Caco-2 (cell line): ENCODE measurements at regions of chr20 and their contacts with region 1.

Region 1: GRCh38 chr20:62808211-62808865 is 3.7 kb downstream of the OGFR start:
- DNase-seq: peak in 1 of 2 experiments; percentile 92
- H3K4me3 ChIP-seq: no peak overlapping the region
- H3K4me3 Mint-ChIP-seq: no peak overlapping the region
- H3K27ac Mint-ChIP-seq: no peak overlapping the region
- H3K4me1 ChIP-seq: peaks cover 14% of the 10 kb centered on the region
- H3K4me1 Mint-ChIP-seq: peaks cover 12% of the 10 kb centered on the region
- H3K27me3 ChIP-seq: no peaks in the 10 kb centered on the region
- H3K27me3 Mint-ChIP-seq: no peaks in the 10 kb centered on the region
- CTCF ChIP-seq: peak; percentile 98 to 100

Region 2: GRCh38 chr20:62466806-62467537 is 341.4 kb before region 1 on chr20:
- CTCF ChIA-PET with region 1: no interaction called
- POLR2A ChIA-PET with region 1: no interaction called
- intact Hi-C with region 1: no loop called
- DNase-seq: no peak
- H3K4me3 ChIP-seq: no peak overlapping the region
- H3K4me3 Mint-ChIP-seq: no peak overlapping the region
- H3K27ac Mint-ChIP-seq: no peak overlapping the region
- H3K4me1 ChIP-seq: peaks cover 1% of the 10 kb centered on the region
- H3K4me1 Mint-ChIP-seq: peaks cover 4% of the 10 kb centered on the region
- H3K27me3 ChIP-seq: no peaks in the 10 kb centered on the region
- H3K27me3 Mint-ChIP-seq: no peaks in the 10 kb centered on the region
- CTCF ChIP-seq: no peak

Region 3: DNA sequence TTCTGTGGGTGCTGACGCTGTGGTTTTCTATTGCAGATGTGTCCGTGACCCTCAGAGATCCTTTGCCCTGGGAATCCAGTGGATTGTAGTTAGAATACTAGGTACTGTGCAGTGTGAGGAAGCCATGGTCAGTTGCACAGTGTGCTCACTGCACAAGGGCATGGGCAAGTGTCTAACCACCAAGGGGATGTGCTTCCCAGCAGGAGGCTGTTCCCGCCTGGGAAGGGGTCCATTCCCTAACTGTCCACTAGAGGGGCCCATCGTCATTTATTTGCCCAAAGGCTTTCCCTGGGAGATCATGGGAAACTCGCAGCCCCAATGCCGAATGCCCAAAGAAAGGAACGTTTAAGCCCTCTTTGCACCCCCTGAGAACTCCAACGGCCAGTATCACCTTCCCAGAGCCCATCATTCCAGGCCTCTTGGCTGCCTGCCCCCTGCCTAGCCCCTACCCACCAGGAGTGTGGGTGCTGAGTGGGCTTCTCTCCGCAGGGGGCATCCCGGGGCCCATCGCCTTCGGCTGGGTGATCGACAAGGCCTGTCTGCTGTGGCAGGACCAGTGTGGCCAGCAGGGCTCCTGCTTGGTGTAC is 139.8 kb before region 1 on chr20:
- CTCF ChIA-PET with region 1: interaction called, 5 read pairs
- POLR2A ChIA-PET with region 1: no interaction called
- intact Hi-C with region 1: loop called (anchors 1 kb)
- DNase-seq: peak; percentile 90 to 94
- H3K4me3 ChIP-seq: no peak overlapping the region
- H3K4me3 Mint-ChIP-seq: no peak overlapping the region
- H3K27ac Mint-ChIP-seq: no peak overlapping the region
- H3K4me1 ChIP-seq: no peaks in the 10 kb centered on the region
- H3K4me1 Mint-ChIP-seq: no peaks in the 10 kb centered on the region
- H3K27me3 ChIP-seq: no peaks in the 10 kb centered on the region
- H3K27me3 Mint-ChIP-seq: no peaks in the 10 kb centered on the region
- CTCF ChIP-seq: peak; percentile 98 to 99

Region 4: DNA sequence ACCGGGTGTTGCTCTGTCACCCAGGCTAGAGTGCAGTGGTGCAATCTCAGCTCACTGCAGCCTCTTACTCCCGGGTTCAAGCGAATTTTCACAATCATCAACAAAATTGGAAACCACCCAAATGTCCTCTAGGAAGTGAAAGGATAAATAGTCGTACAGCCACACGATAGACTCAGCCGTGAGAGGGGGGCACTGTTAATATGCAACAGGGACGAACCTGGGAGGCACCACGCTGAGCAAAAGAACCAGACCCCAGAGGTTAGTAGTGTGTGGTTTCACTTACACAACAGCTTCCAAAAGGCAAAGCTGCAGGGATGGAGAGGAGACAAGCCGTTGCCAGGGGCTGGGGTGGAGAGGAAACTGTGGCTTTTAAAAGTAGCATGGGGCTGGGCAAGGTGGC is 129.8 kb before region 1 on chr20:
- CTCF ChIA-PET with region 1: interaction called, 10 read pairs
- POLR2A ChIA-PET with region 1: no interaction called
- intact Hi-C with region 1: no loop called
- DNase-seq: no peak
- H3K4me3 ChIP-seq: no peak overlapping the region
- H3K4me3 Mint-ChIP-seq: no peak overlapping the region
- H3K27ac Mint-ChIP-seq: no peak overlapping the region
- H3K4me1 ChIP-seq: no peaks in the 10 kb centered on the region
- H3K4me1 Mint-ChIP-seq: no peaks in the 10 kb centered on the region
- H3K27me3 ChIP-seq: peaks cover 2% of the 10 kb centered on the region; the same call in 1 of the 2 replicates
- H3K27me3 Mint-ChIP-seq: peaks cover 18% of the 10 kb centered on the region
- CTCF ChIP-seq: no peak

Region 5: DNA sequence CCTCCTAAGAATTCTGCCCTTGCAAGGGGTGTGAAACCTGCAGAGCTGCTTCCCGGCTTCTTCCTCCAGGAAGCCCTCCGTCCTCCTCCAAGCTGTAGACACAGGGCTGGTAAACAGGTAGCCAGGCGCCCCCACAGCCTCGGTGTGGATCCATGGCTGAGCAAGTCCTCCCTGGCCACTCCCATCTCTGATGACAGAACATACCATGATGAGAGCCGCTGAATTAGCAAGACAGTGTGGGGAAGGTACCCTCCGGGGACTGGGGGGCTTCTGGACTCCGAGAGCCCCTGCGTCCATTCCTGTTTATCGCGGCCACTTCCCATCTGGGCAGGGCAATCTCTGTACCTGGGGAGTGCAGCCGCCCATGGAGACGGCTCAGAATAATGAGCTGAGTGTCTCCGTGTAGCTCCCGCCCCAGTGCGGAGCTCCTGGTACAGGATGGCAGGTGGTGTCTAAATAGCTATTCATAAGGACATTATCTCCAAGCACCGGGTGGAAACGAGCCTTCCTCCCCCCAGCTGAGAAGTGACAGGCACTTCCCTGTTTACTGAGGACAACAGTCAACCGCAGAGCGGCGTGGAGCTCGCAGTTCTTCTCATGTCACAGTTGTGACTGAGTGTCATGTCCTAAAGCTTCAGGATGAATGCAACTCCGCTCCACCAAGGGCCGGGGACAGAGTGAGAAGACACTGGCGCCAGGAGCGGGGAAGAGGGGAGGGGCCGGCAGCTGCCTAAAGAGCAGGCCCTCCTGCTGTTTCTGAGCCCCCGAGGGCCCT is 122.4 kb before region 1 on chr20:
- CTCF ChIA-PET with region 1: interaction called, 7 read pairs
- POLR2A ChIA-PET with region 1: no interaction called
- intact Hi-C with region 1: loop called (anchors 5 kb)
- DNase-seq: no peak
- H3K4me3 ChIP-seq: no peak overlapping the region
- H3K4me3 Mint-ChIP-seq: peak overlapping the region; percentile 20
- H3K27ac Mint-ChIP-seq: no peak overlapping the region
- H3K4me1 ChIP-seq: peaks cover 10% of the 10 kb centered on the region
- H3K4me1 Mint-ChIP-seq: peaks cover 9% of the 10 kb centered on the region
- H3K27me3 ChIP-seq: 0 out of 2 replicates have a peak, but pooled peaks cover 2% of the 10 kb centered on the region
- H3K27me3 Mint-ChIP-seq: peaks cover 11% of the 10 kb centered on the region
- CTCF ChIP-seq: no peak

Region 6: GRCh38 chr20:62822788-62823651 is 14.7 kb after region 1 on chr20:
- CTCF ChIA-PET with region 1: interaction called, 10 read pairs
- POLR2A ChIA-PET with region 1: no interaction called
- intact Hi-C with region 1: no loop called
- DNase-seq: peak; percentile 83 to 88
- H3K4me3 ChIP-seq: no peak overlapping the region
- H3K4me3 Mint-ChIP-seq: no peak overlapping the region
- H3K27ac Mint-ChIP-seq: peak overlapping the region; percentile 29
- H3K4me1 ChIP-seq: peaks cover 5% of the 10 kb centered on the region
- H3K4me1 Mint-ChIP-seq: no peaks in the 10 kb centered on the region
- H3K27me3 ChIP-seq: no peaks in the 10 kb centered on the region
- H3K27me3 Mint-ChIP-seq: no peaks in the 10 kb centered on the region
- CTCF ChIP-seq: peak; percentile 36 to 60

Region 7: GRCh38 chr20:62861726-62862336 is 53.5 kb after region 1 on chr20 and contains the start of gene TCFL5:
- CTCF ChIA-PET with region 1: no interaction called
- POLR2A ChIA-PET with region 1: interaction called, 5 read pairs
- intact Hi-C with region 1: loop called (anchors 5 kb)
- DNase-seq: peak; percentile 97 to 100
- H3K4me3 ChIP-seq: peak within 1 kb of the TSS; percentile 85
- H3K4me3 Mint-ChIP-seq: peak within 1 kb of the TSS; percentile 65
- H3K27ac Mint-ChIP-seq: peak within 1 kb of the TSS; percentile 13
- H3K4me1 ChIP-seq: peaks cover 14% of the 10 kb centered on the region
- H3K4me1 Mint-ChIP-seq: peaks cover 15% of the 10 kb centered on the region
- H3K27me3 ChIP-seq: no peaks in the 10 kb centered on the region
- H3K27me3 Mint-ChIP-seq: peaks cover 4% of the 10 kb centered on the region
- CTCF ChIP-seq: no peak
- total RNA-seq, gene TCFL5: 14.6 and 15.1 TPM in 2 replicates